Colonic mucosa (tissue), 4 donors: ENCODE measurements at regions of chr2 and their contacts with region 1.

Region 1: GRCh38 chr2:159921752-159922404 is 123.9 kb upstream of the CD302 start:
- DNase-seq: peak; percentile 84
- H3K4me3 ChIP-seq: no peak overlapping the region
- H3K27ac ChIP-seq: no peak overlapping the region
- H3K4me1 ChIP-seq: no peaks in the 10 kb centered on the region
- H3K27me3 ChIP-seq: no peaks in the 10 kb centered on the region
- CTCF ChIP-seq: peak; percentile 78

Region 2: GRCh38 chr2:159506764-159507440 is 415.0 kb before region 1 on chr2:
- intact Hi-C with region 1: no loop called
- DNase-seq: no peak
- H3K4me3 ChIP-seq: no peak overlapping the region
- H3K27ac ChIP-seq: no peak overlapping the region
- H3K4me1 ChIP-seq: peaks cover 5% of the 10 kb centered on the region
- H3K27me3 ChIP-seq: no peaks in the 10 kb centered on the region
- CTCF ChIP-seq: no peak

Region 3: GRCh38 chr2:159817283-159817682 is 104.6 kb before region 1 on chr2:
- intact Hi-C with region 1: loop called (anchors 10 kb)
- DNase-seq: no peak
- H3K4me3 ChIP-seq: no peak overlapping the region
- H3K27ac ChIP-seq: no peak overlapping the region
- H3K4me1 ChIP-seq: no peaks in the 10 kb centered on the region
- H3K27me3 ChIP-seq: no peaks in the 10 kb centered on the region
- CTCF ChIP-seq: no peak

Region 4: DNA sequence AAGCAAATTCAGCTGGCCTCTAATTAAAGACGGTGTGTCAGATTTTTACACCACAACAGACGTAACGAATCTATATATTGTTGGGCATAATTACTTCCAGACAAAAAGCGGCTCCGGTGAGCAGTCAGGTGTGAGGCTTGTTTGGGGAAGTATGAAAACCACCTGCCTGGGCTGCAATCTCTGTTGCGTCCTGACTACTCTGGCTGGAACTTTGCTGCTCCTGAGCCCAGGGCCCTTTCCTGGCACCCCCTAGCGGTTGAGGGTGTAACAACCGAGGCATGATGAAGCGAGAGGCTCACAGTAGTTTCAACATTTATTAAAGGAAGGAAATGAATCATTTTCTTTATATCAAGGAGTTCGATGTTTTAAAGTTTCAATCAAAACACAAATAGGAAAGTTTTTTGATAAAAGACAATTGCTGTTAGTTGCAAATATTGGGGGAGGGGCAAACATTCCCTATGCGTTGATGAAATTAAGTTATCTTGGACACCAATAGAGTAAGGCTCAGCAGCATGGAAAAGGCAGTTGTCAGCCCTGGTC is 288.8 kb after region 1 on chr2:
- intact Hi-C with region 1: no loop called
- DNase-seq: peak; percentile 89
- H3K4me3 ChIP-seq: no peak overlapping the region
- H3K27ac ChIP-seq: no peak overlapping the region
- H3K4me1 ChIP-seq: no peaks in the 10 kb centered on the region
- H3K27me3 ChIP-seq: no peaks in the 10 kb centered on the region
- CTCF ChIP-seq: peak; percentile 92